GM18951 (cell line): ENCODE measurements at regions of chr9 and their contacts with region 1.

Region 1: GRCh38 chr9:21334701-21335632 is at the start of gene KLHL9:
- POLR2A ChIP-seq: peak; percentile 81

Region 2: GRCh38 chr9:21267485-21268346 is 67.3 kb before region 1 on chr9:
- in situ Hi-C with region 1: no loop called
- POLR2A ChIP-seq: no peak

Region 3: GRCh38 chr9:21395778-21396717 is 61.1 kb after region 1 on chr9:
- in situ Hi-C with region 1: loop called (anchors 5 kb)
- POLR2A ChIP-seq: no peak